A549 (cell line): ENCODE measurements at regions of chr1 and their contacts with region 1.

Region 1: DNA sequence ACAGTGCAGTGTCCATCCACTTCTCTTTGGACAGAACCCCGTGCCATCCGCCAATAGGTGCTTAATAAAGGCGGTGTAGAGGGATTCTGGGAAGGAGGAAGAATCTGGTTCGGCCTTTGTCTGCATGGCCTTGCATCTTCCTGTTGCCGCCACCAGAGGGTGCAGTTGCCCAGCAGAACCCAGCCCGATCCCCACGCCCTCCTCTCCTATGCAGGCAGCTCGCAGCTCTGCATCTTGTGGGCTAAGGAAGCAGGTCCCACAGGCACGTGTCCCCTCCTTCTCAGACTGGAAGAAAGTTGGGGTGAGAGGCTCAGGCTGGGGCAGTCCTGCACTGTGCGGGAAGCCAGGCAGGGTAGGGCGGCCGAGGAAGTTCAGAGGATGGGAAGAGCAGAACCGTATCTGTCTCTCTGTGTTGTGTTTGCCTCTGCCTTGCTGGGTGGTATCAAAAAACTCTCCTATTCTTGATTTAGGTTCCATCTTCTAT is 20.8 kb downstream of the NAV1 start:
- DNase-seq: peak; percentile 85 to 92
- ATAC-seq: peak; percentile 88 to 96
- H3K4me3 ChIP-seq: no peak overlapping the region
- H3K27ac ChIP-seq: peak overlapping the region; percentile 60 to 80
- H3K4me1 ChIP-seq: peaks cover 37% of the 10 kb centered on the region
- CTCF ChIP-seq: peak; percentile 95
- EP300 ChIP-seq: no peak
- POLR2A ChIP-seq: no peak
- RAD21 ChIP-seq: peak; percentile 99 to 100

Region 2: DNA sequence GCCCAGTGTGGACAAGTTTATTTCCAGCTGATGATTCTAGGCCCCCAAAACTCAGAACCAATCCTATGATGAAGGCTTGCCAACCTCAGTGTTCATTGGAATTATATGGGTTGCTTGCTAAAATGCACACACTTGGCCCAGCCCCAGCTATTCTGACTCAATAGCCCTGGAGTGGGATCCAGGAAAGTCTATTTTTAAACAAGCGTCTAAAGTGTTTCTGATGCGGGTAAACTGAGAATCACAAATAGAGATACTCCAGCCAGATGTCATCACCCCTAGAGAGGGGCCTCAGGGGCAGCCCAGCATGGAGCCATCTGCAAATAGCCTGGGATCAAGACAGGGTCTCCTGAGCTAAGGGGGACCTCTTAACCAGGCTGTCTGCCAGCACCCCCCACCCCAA is 230.4 kb before region 1 on chr1:
- CTCF ChIA-PET with region 1: no interaction called
- POLR2A ChIA-PET with region 1: no interaction called
- DNase-seq: no peak
- ATAC-seq: no peak
- H3K4me3 ChIP-seq: no peak overlapping the region
- H3K27ac ChIP-seq: no peak overlapping the region
- H3K4me1 ChIP-seq: no peaks in the 10 kb centered on the region
- CTCF ChIP-seq: no peak
- EP300 ChIP-seq: no peak
- POLR2A ChIP-seq: no peak
- RAD21 ChIP-seq: no peak

Region 3: DNA sequence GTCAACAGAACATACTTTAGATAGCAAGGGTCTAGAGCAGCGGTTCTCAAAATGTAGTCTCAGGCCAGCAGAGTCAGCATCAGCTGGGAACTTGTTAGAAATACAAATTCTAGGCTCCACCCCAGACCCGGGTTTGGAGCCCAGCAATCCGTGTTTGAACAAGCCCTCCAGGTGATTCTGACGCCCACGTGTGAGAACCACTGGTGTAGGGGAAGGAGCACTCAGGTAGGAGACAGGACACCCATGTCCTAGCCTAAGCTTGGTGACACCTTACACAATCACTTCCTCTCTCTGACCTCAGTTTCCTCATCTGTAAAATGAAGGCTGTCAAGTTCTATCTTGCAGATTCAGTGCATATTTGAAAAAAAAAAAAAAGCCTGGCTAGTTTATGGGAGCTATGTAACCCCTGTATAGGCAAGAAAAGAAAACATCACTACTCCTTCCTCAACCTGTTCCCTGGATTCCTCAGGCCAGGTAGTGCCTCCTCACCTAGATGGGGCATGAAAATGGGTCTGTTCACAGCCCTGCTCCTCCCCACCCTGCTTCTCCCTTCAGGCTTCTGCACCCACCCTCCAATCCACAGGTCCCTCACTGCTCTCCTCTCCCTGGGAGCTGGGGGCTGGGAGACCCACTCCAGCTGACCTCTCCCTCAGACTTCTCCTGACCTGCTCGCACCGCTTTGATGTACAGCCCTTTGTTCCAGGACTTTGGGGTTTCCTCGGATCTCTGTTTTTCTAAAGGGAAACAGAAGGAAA is 83.6 kb before region 1 on chr1:
- CTCF ChIA-PET with region 1: no interaction called
- POLR2A ChIA-PET with region 1: no interaction called
- DNase-seq: no peak
- ATAC-seq: no peak
- H3K4me3 ChIP-seq: no peak overlapping the region
- H3K27ac ChIP-seq: peak overlapping the region; percentile 7 to 75; a peak in 3 of 6 replicates
- H3K4me1 ChIP-seq: peaks cover 49% of the 10 kb centered on the region
- CTCF ChIP-seq: no peak
- EP300 ChIP-seq: no peak
- POLR2A ChIP-seq: no peak
- RAD21 ChIP-seq: no peak

Region 4: GRCh38 chr1:201538612-201539551 is 20.8 kb before region 1 on chr1 and contains the start of gene NAV1:
- CTCF ChIA-PET with region 1: interaction called, 14 read pairs
- POLR2A ChIA-PET with region 1: no interaction called
- DNase-seq: peak; percentile 52 to 71
- ATAC-seq: peak; percentile 64 to 85
- H3K4me3 ChIP-seq: peak within 1 kb of the TSS; percentile 77
- H3K27ac ChIP-seq: peak within 1 kb of the TSS; percentile 64 to 92
- H3K4me1 ChIP-seq: peaks cover 40% of the 10 kb centered on the region
- CTCF ChIP-seq: no peak
- EP300 ChIP-seq: no peak
- POLR2A ChIP-seq: no peak; the same call in none of the 2 replicates
- RAD21 ChIP-seq: no peak
- polyA plus RNA-seq, gene NAV1: 3.7 and 6.4 TPM in 2 replicates

Region 5: DNA sequence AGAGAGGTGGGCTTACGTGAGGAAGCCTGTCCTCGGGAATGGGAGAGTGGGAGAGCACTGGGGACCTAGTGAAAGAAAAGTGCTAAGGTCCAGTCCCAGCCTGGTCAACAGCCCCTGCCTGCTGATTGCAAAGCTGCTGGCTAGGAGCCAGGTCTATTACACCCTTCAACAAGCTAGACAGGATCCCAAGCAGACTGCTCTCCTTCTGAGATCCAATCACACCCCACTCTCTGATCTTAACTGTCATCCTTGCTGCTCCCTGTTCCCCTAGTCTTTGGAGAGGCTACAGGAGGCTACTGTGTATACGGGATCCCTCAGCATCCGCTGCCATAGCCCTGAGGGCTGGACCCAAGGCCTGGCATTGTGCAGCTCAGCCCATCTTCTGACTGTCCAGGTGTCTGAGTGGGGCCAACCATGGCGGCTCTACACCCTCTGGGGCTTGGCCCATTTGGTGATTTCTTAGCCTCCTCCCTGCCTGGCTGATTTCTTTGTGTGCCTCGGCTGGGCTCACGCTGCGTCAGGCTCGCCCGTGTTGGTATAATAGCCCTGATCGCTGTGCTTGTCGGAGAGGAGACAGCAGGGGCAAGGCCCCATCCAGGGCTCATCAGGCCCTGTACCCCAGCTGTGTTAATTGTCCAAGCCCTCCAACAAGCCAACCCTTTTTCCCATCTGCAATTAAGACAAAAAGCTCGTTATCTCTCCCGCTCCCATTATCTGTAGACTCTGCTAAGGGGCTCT is 23.2 kb after region 1 on chr1:
- CTCF ChIA-PET with region 1: interaction called, 84 read pairs
- POLR2A ChIA-PET with region 1: no interaction called
- DNase-seq: no peak
- ATAC-seq: peak; percentile 45 to 51; a peak in 3 of 6 replicates
- H3K4me3 ChIP-seq: no peak overlapping the region
- H3K27ac ChIP-seq: peak overlapping the region; percentile 23 to 73; a peak in 4 of 6 replicates
- H3K4me1 ChIP-seq: peaks cover 37% of the 10 kb centered on the region
- CTCF ChIP-seq: no peak
- EP300 ChIP-seq: no peak
- POLR2A ChIP-seq: no peak
- RAD21 ChIP-seq: no peak

Region 6: DNA sequence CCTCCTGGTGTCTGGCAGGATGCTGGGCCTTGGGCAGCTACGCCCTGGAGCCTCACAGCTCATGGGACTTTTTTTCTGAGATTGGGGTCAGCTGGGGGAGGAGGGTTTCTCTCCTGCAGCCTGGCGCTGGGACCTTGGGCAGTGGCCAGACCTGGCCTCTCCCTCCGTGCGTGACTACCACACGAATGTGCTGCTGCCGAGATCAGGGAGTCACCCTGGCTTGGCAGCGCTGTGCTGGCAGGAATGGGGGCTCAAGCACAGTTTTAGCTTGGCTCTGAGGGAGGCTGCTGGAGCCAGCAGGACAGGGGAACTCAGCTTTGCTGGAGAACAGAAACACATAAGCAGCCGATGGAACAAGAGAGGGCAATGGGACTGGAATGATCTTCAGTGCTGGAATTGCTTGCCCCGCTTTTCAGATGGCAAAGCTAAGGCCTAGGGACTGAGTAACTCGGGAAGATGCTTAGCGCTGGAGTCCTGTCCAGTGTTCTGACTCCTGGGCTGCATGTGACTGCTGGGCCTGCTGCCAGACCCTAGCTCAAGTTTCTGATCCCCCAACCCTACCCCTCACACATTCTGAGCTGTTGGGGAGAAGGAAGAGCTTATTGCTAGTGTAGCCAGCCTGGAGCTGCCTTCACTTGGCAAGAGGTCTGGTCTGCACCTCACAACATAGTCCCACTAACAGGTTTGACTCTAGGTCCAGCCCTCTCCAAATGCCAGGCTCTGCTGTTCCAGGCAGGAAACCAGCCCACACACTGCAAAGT is 49.1 kb after region 1 on chr1:
- CTCF ChIA-PET with region 1: interaction called, 39 read pairs
- POLR2A ChIA-PET with region 1: no interaction called
- DNase-seq: no peak
- ATAC-seq: 0 out of 6 replicates have a peak, but pooled peaks of 1 of the 2 experiments have one; percentile 4
- H3K4me3 ChIP-seq: no peak overlapping the region
- H3K27ac ChIP-seq: peak overlapping the region in 1 of 2 experiments; percentile 62; a peak in 3 of 6 replicates
- H3K4me1 ChIP-seq: peaks cover 24% of the 10 kb centered on the region
- CTCF ChIP-seq: no peak
- EP300 ChIP-seq: no peak
- POLR2A ChIP-seq: no peak
- RAD21 ChIP-seq: no peak

Region 7: DNA sequence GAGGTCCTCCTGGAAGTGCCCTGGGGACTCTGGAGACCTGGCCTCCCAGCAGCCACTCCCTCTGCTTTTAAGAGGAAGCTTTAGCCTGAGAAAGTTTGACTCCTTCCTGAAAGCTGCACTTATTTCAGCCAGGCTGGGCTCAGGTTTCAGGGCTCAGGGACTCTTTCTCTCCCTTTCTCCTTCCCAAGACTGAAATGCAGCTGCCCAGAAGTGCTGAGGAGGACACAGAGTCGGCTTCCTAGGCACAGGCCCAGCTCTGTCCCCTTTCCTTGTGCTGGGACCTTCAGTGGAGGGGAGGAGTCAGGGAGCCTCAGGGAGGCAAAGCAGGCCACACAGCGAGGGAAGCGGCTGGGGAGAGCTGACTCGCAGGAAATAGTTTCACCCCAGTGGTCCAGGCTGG is 116.5 kb after region 1 on chr1:
- CTCF ChIA-PET with region 1: interaction called, 17 read pairs
- POLR2A ChIA-PET with region 1: no interaction called
- DNase-seq: peak in 1 of 2 experiments; percentile 29
- ATAC-seq: peak; percentile 63 to 71; a peak in 4 of 6 replicates
- H3K4me3 ChIP-seq: no peak overlapping the region
- H3K27ac ChIP-seq: peak overlapping the region; percentile 46 to 79; a peak in 4 of 6 replicates
- H3K4me1 ChIP-seq: peaks cover 25% of the 10 kb centered on the region
- CTCF ChIP-seq: no peak
- EP300 ChIP-seq: no peak
- POLR2A ChIP-seq: no peak
- RAD21 ChIP-seq: no peak

Region 8: GRCh38 chr1:201732351-201732750 is 172.6 kb after region 1 on chr1:
- CTCF ChIA-PET with region 1: interaction called, 10 read pairs
- POLR2A ChIA-PET with region 1: no interaction called
- DNase-seq: no peak
- ATAC-seq: no peak
- H3K4me3 ChIP-seq: no peak overlapping the region
- H3K27ac ChIP-seq: no peak overlapping the region
- H3K4me1 ChIP-seq: no peaks in the 10 kb centered on the region
- CTCF ChIP-seq: no peak
- EP300 ChIP-seq: no peak
- POLR2A ChIP-seq: no peak
- RAD21 ChIP-seq: no peak